Calu3 (cell line): ENCODE measurements at regions of chr2 and their contacts with region 1.

Region 1: GRCh38 chr2:30711646-30712085 is 95.6 kb downstream of the CAPN13 start:
- DNase-seq: peak; percentile 90
- H3K4me3 Mint-ChIP-seq: no peak overlapping the region
- H3K27ac Mint-ChIP-seq: no peak overlapping the region
- H3K4me1 Mint-ChIP-seq: no peaks in the 10 kb centered on the region
- H3K27me3 Mint-ChIP-seq: no peaks in the 10 kb centered on the region
- CTCF ChIP-seq: peak; percentile 98

Region 2: GRCh38 chr2:30165050-30165520 is 546.6 kb before region 1 on chr2:
- CTCF ChIA-PET with region 1: interaction called, 111 read pairs
- intact Hi-C with region 1: loop called (anchors 1 kb)
- DNase-seq: peak; percentile 69
- H3K4me3 Mint-ChIP-seq: no peak overlapping the region
- H3K27ac Mint-ChIP-seq: no peak overlapping the region
- H3K4me1 Mint-ChIP-seq: no peaks in the 10 kb centered on the region
- H3K27me3 Mint-ChIP-seq: peaks cover 29% of the 10 kb centered on the region
- CTCF ChIP-seq: peak; percentile 75

Region 3: GRCh38 chr2:30455114-30455738 is 256.4 kb before region 1 on chr2:
- CTCF ChIA-PET with region 1: no interaction called
- intact Hi-C with region 1: loop called (anchors 10 kb)
- DNase-seq: no peak
- H3K4me3 Mint-ChIP-seq: no peak overlapping the region
- H3K27ac Mint-ChIP-seq: no peak overlapping the region
- H3K4me1 Mint-ChIP-seq: peaks cover 57% of the 10 kb centered on the region
- H3K27me3 Mint-ChIP-seq: no peaks in the 10 kb centered on the region
- CTCF ChIP-seq: no peak

Region 4: GRCh38 chr2:30807249-30807648 is 95.6 kb after region 1 on chr2 and contains the start of gene CAPN13:
- CTCF ChIA-PET with region 1: interaction called, 10 read pairs
- intact Hi-C with region 1: no loop called
- DNase-seq: peak; percentile 80
- H3K4me3 Mint-ChIP-seq: peak within 1 kb of the TSS; percentile 44
- H3K27ac Mint-ChIP-seq: peak within 1 kb of the TSS; percentile 74
- H3K4me1 Mint-ChIP-seq: peaks cover 16% of the 10 kb centered on the region
- H3K27me3 Mint-ChIP-seq: peaks cover 13% of the 10 kb centered on the region
- CTCF ChIP-seq: peak; percentile 31
- total RNA-seq, gene CAPN13: 11.8 and 12.0 TPM in 2 replicates

Region 5: DNA sequence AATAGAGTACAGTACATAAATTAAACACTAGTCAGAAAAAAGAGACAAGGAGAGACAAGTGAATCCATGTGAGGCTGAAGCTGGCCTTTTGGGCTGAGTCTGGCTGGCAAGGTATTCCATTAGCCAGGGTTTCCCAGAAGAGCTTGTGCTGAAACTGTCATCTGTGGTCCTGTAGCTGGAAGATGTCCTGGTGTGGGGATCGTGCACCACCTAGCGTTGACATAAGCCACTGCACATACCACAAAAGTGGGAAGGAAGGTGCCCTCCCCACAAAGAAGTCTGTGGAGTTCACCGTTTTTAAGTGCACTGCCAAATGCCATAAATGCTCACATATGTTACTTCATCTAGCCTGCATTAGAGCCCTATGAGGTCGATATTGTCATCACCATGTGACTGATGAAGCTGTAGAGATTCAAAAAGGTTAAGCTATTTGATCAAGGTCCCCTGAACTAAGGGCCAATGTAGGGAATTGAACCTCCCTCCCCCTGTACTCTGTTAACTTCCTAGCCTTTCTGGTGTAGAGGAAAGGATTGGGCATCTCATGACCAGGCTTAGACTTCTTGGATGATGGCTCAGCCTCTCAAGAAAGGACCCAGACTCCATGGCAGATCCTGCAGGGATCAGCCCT is 458.5 kb after region 1 on chr2:
- CTCF ChIA-PET with region 1: interaction called, 30 read pairs
- intact Hi-C with region 1: loop called (anchors 1 kb)
- DNase-seq: peak; percentile 69
- H3K4me3 Mint-ChIP-seq: no peak overlapping the region
- H3K27ac Mint-ChIP-seq: no peak overlapping the region
- H3K4me1 Mint-ChIP-seq: no peaks in the 10 kb centered on the region
- H3K27me3 Mint-ChIP-seq: peaks cover 67% of the 10 kb centered on the region
- CTCF ChIP-seq: peak; percentile 88

Region 6: DNA sequence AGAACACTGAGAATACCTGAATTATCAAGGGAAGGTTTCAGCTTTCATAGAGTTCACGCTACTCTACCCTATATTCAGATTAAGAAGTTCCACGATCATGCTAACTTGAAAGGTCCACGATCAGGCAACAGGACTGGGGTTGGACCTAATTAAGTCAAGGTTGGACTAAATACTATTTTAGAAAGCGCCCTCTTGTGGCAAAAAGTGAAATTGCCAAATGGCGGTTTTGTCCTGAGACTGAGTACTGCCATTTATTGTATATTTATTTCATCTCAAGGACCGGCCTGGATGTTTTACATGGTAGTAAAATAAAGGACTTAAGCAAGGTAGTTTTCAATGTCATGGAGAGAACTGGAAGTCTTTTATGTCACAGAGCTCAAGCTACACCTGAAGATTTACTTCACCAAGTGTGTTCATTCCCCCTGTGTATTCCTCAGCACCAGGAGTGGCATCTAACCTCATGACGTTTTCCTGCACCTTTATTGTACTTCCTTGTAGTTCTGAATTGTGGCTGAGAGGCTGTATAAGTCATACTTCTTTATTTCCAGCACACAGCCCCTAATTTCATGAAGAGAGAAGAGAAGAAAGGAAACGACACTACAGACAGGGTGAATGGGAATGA is 812.3 kb after region 1 on chr2:
- CTCF ChIA-PET with region 1: no interaction called
- intact Hi-C with region 1: loop called (anchors 10 kb)
- DNase-seq: peak; percentile 70
- H3K4me3 Mint-ChIP-seq: no peak overlapping the region
- H3K27ac Mint-ChIP-seq: no peak overlapping the region
- H3K4me1 Mint-ChIP-seq: no peaks in the 10 kb centered on the region
- H3K27me3 Mint-ChIP-seq: peaks cover 45% of the 10 kb centered on the region
- CTCF ChIP-seq: peak; percentile 59